ENCODE measurements at regions of chr6 and their contacts with region 1.

Region 1: DNA sequence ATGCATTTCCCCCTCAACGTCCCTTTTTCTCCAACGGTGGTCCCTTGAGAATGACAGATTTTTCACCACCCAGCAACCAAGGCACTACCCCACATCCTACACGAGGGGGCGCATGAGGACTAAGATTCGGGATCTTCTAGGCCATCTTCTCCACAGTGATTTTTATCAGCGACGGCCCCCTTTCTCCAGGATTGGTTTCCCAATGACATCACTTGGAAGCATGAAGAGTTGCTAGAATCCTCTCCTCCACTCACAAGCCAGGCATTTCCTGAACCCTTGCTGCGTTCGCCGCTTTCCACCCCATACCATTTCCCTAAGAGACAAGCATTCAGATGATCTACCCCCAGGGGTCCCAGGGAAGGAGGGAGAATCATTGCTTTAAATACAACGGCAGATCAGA is 252.0 kb downstream of the HIVEP2 start:
- DNase-seq: peak; percentile 54 to 68 (median 62)
- H3K4me3 ChIP-seq: no peak overlapping the region
- H3K27ac ChIP-seq: no peak overlapping the region
- H3K4me1 ChIP-seq: peaks cover 2 to 20% (median 6%) of the 10 kb centered on the region in 4 experiments
- H3K27me3 ChIP-seq: no peaks in the 10 kb centered on the region

Region 2: GRCh38 chr6:142716097-142716496 is 23.2 kb after region 1 on chr6:
- CTCF ChIA-PET with region 1: interaction called, 12 read pairs
- POLR2A ChIA-PET with region 1: no interaction called
- DNase-seq: no peak
- H3K4me3 ChIP-seq: no peak overlapping the region
- H3K27ac ChIP-seq: no peak overlapping the region
- H3K4me1 ChIP-seq: peaks cover 5 to 17% (median 9%) of the 10 kb centered on the region in 4 experiments
- H3K27me3 ChIP-seq: no peaks in the 10 kb centered on the region

Region 3: GRCh38 chr6:142746524-142746923 is 53.6 kb after region 1 on chr6:
- CTCF ChIA-PET with region 1: interaction called, 27 read pairs
- POLR2A ChIA-PET with region 1: no interaction called
- DNase-seq: peak; percentile 62 to 73 (median 69)
- H3K4me3 ChIP-seq: no peak overlapping the region
- H3K27ac ChIP-seq: no peak overlapping the region
- H3K4me1 ChIP-seq: no peaks in the 10 kb centered on the region
- H3K27me3 ChIP-seq: no peaks in the 10 kb centered on the region

Region 4: GRCh38 chr6:143026696-143027449 is 333.9 kb after region 1 on chr6:
- CTCF ChIA-PET with region 1: interaction called, 34 read pairs
- POLR2A ChIA-PET with region 1: no interaction called
- DNase-seq: peak; percentile 48 to 67 (median 64)
- H3K4me3 ChIP-seq: no peak overlapping the region
- H3K27ac ChIP-seq: no peak overlapping the region
- H3K4me1 ChIP-seq: no peaks in the 10 kb centered on the region
- H3K27me3 ChIP-seq: no peaks in the 10 kb centered on the region

Region 5: GRCh38 chr6:143427109-143427817 is 734.3 kb after region 1 on chr6:
- CTCF ChIA-PET with region 1: interaction called, 36 read pairs
- POLR2A ChIA-PET with region 1: interaction called, 4 read pairs
- DNase-seq: peak; percentile 72 to 89 (median 88)
- H3K4me3 ChIP-seq: no peak overlapping the region
- H3K27ac ChIP-seq: no peak overlapping the region
- H3K4me1 ChIP-seq: no peaks in the 10 kb centered on the region
- H3K27me3 ChIP-seq: no peaks in the 10 kb centered on the region